ENCODE measurements at regions of chr6 and their contacts with region 1.

Region 1: GRCh38 chr6:80106418-80107235 is at the start of gene BCKDHB:
- DNase-seq: peak; percentile 98 to 99
- ATAC-seq: peak; percentile 99 to 100
- H3K4me3 ChIP-seq: peak within 1 kb of the TSS; percentile 80 to 83 (median 81)
- H3K27ac ChIP-seq: peak within 1 kb of the TSS; percentile 87 to 93 (median 88)
- H3K4me1 ChIP-seq: peaks cover 11 to 14% of the 10 kb centered on the region in 2 donors
- H3K27me3 ChIP-seq: no peaks in the 10 kb centered on the region
- CTCF ChIP-seq: no peak
- POLR2A ChIP-seq: peak; percentile 87 to 92
- total RNA-seq, gene BCKDHB: 1.6 to 6.9 (median 4.8) TPM

Region 2: GRCh38 chr6:79536954-79537747 is 569.5 kb before region 1 on chr6 and contains the start of gene LCA5:
- in situ Hi-C with region 1: loop called in 1 of 4 experiments (anchors 25 kb)
- intact Hi-C with region 1: no loop called
- DNase-seq: peak; percentile 94 to 95
- ATAC-seq: peak; percentile 99
- H3K4me3 ChIP-seq: peak within 1 kb of the TSS; percentile 76 to 99 (median 91)
- H3K27ac ChIP-seq: peak within 1 kb of the TSS; percentile 85 to 93 (median 88)
- H3K4me1 ChIP-seq: peaks cover 3 to 19% of the 10 kb centered on the region in 2 donors
- H3K27me3 ChIP-seq: no peaks in the 10 kb centered on the region
- CTCF ChIP-seq: no peak
- POLR2A ChIP-seq: peak in 1 of 2 donors; percentile 63
- total RNA-seq, gene LCA5: 0.92 to 3.0 (median 1.2) TPM

Region 3: DNA sequence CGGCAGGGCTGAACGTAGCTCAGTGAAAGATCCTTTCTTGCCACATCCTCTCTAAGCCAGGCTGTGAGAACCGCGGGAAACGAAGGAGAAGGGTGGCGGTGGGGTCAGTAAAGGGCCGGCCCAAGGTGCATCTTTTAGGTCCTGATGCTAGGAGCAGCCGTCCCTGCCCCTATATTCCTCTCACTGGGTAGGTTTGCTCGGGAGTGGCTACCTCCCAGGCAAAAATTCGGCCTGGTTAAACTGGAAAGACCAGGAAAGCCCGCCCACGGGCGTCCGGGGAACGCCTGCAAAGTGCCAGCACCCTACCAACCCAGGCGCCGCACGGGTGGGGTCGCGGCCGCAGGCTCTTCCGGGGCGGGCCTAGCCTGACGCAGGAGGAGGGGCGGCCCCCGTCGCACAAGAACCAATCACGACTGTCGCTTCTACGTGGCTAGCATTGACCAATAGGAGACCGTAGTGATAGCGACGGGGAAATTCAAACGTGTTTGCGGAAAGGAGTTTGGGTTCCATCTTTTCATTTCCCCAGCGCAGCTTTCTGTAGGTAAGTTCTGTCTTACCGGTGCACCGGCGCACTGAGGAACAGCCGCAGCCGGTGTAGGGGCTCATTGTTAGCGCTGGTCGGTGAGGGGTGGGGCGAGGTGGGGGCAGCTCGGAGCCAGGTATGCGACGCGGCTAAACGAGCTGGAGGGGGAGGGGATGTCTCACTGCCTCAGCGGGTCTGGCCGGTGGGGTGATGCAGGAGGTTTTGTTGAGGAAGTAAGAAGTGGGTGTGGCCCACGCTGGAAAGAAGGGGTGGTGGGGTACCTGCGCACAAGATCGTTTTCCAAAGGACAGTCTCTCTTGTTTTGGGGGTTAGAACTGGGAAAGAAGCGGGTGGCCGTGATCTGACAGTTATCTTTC is 102.2 kb before region 1 on chr6 and contains the start of gene TTK:
- in situ Hi-C with region 1: no loop called
- intact Hi-C with region 1: loop called (anchors 5 kb)
- DNase-seq: peak; percentile 78 to 87
- ATAC-seq: peak; percentile 98 to 100
- H3K4me3 ChIP-seq: peak within 1 kb of the TSS; percentile 69 to 71 (median 70)
- H3K27ac ChIP-seq: peak within 1 kb of the TSS; percentile 71 to 82 (median 80)
- H3K4me1 ChIP-seq: peaks cover 7 to 12% of the 10 kb centered on the region in 2 donors
- H3K27me3 ChIP-seq: no peaks in the 10 kb centered on the region
- CTCF ChIP-seq: no peak
- POLR2A ChIP-seq: peak; percentile 35 to 57
- total RNA-seq, gene TTK: 0.24 to 3.4 TPM in 2 of 4 donors, not detected in the others

Measured in gastrocnemius medialis (tissue), 4 donors.